Activated CD8-positive, alpha-beta T cell treated with anti-CD3 and anti-CD28 coated beads, Interleukin-2, amount 10 ng/mL, durations not matched to agents 7 days and 5 days (primary cell): ENCODE measurements at regions of chr6 and their contacts with region 1.

Region 1: GRCh38 chr6:42104095-42104806 is 38.2 kb downstream of the C6orf132 start:
- DNase-seq: peak; percentile 82
- ATAC-seq: peak; percentile 94
- H3K4me3 Mint-ChIP-seq: peak overlapping the region; percentile 65
- H3K27ac Mint-ChIP-seq: peak overlapping the region; percentile 74
- H3K4me1 Mint-ChIP-seq: peaks cover 30% of the 10 kb centered on the region
- H3K27me3 Mint-ChIP-seq: peaks cover 2% of the 10 kb centered on the region

Region 2: GRCh38 chr6:41722969-41723529 is 381.2 kb before region 1 on chr6:
- CTCF ChIA-PET with region 1: no interaction called
- POLR2A ChIA-PET with region 1: no interaction called
- DNase-seq: no peak
- ATAC-seq: no peak
- H3K4me3 Mint-ChIP-seq: no peak overlapping the region
- H3K27ac Mint-ChIP-seq: no peak overlapping the region
- H3K4me1 Mint-ChIP-seq: peaks cover 15% of the 10 kb centered on the region
- H3K27me3 Mint-ChIP-seq: no peaks in the 10 kb centered on the region

Region 3: GRCh38 chr6:41735427-41736356 is 368.6 kb before region 1 on chr6 and contains the start of gene TFEB:
- CTCF ChIA-PET with region 1: no interaction called
- POLR2A ChIA-PET with region 1: no interaction called
- DNase-seq: peak; percentile 95
- ATAC-seq: peak; percentile 69
- H3K4me3 Mint-ChIP-seq: peak within 1 kb of the TSS; percentile 77
- H3K27ac Mint-ChIP-seq: peak within 1 kb of the TSS; percentile 74
- H3K4me1 Mint-ChIP-seq: peaks cover 34% of the 10 kb centered on the region
- H3K27me3 Mint-ChIP-seq: no peaks in the 10 kb centered on the region
- total RNA-seq, gene TFEB: 18.5 to 21.2 TPM

Region 4: DNA sequence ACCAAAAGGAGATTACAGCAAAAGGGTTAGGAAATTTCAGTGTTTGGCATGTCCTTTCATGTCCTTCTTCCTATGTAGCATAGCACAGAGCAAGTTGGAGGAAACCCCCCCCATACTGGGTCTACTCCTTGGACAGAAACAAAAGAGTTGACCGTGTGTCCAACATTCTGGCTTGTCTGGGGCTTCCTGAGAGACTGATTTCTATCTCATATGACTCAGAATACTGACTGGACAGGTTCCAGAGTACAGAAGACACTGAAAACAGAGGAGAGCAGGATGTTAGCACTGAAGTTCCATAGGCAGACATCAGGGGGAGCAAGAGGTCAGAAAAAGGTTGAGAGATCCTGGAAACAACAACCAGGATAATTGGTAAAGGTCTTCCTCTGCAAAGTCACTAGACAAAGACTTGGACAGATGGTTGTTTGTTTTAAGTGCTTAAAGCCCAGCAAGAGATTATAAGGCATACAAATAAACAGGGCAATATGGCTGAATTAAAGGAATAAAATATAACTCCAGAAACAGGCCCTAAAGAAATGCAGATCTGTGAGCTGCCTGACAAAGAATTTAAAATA is 257.5 kb before region 1 on chr6:
- CTCF ChIA-PET with region 1: interaction called, 15 read pairs
- POLR2A ChIA-PET with region 1: no interaction called
- DNase-seq: peak; percentile 65
- ATAC-seq: peak; percentile 81
- H3K4me3 Mint-ChIP-seq: no peak overlapping the region
- H3K27ac Mint-ChIP-seq: no peak overlapping the region
- H3K4me1 Mint-ChIP-seq: peaks cover 9% of the 10 kb centered on the region
- H3K27me3 Mint-ChIP-seq: no peaks in the 10 kb centered on the region

Region 5: DNA sequence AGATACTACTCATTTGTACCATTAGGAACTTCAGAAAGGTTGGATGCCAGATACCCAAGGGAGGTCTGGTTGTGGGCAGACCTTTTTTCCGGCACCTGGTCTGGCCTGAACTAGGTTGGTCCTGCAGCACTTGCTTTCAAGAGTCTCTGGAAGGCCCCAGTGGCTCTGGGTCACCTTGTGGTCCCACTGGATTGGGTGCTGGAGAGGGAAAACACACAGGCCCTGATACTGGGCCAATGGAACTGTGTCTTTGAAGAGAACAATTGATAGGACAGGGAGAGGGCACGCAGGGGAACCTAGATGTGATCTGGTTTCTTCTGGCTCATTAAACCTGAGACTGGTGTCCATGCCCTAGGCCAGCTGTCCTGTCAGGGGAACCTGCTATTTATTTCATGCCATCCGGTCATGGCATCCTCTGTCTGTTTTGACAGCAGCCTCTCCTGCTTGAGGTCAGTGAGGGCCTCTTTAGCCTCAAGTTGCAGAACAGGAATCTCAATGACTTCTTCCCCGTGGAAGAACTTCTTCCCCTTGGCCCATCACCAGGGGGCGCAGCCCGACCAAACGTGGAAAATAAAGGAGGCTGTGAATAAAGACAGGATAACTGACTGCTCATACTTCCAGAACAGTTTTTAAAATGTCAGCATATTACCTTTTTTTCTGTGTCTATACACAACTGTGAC is 29.0 kb before region 1 on chr6:
- CTCF ChIA-PET with region 1: interaction called, 26 read pairs
- POLR2A ChIA-PET with region 1: no interaction called
- DNase-seq: peak; percentile 61
- ATAC-seq: no peak
- H3K4me3 Mint-ChIP-seq: no peak overlapping the region
- H3K27ac Mint-ChIP-seq: no peak overlapping the region
- H3K4me1 Mint-ChIP-seq: no peaks in the 10 kb centered on the region
- H3K27me3 Mint-ChIP-seq: no peaks in the 10 kb centered on the region

Region 6: DNA sequence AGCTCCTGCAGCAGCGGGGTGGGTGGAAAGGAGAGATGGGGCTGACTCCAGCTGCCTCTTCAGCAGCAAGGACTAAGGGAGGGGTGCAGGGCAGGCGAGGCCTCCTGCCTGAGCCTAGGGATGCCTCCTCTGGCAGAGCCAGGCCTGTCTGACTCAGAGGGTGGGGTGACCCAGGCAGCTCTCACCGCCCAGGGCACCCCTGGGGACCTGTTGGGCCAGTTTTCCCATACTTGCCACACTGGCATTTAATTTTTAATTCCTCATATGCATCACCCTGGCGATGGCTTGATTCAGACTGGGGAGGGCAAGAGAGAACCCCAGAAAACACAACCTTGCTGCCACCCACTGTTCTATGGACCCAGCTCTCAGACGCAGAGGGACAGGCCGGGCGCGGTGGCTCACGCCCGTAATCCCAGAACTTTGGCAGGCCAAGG is 18.5 kb after region 1 on chr6:
- CTCF ChIA-PET with region 1: interaction called, 13 read pairs
- POLR2A ChIA-PET with region 1: no interaction called
- DNase-seq: no peak
- ATAC-seq: no peak
- H3K4me3 Mint-ChIP-seq: no peak overlapping the region
- H3K27ac Mint-ChIP-seq: no peak overlapping the region
- H3K4me1 Mint-ChIP-seq: no peaks in the 10 kb centered on the region
- H3K27me3 Mint-ChIP-seq: no peaks in the 10 kb centered on the region

Region 7: DNA sequence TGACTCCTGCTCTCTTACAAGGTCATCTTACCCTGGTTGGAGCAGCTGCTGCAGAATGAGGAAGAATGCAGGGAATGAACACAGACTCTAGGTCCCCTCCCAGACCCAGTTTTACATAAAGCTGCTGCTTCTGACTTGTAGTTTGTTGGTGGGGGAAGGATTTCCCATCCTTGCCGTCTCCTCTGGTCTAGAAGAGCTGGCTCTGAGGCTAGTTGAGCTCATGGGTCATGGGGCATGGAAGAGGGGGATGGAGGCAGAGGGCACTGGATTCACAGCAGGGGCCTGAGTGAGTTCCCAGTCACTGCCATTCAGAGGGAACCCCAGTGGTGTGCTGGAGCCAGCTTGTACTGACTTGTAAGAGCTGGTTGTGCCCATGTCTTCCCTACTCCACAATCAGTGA is 59.7 kb after region 1 on chr6:
- CTCF ChIA-PET with region 1: interaction called, 12 read pairs
- POLR2A ChIA-PET with region 1: no interaction called
- DNase-seq: no peak
- ATAC-seq: no peak
- H3K4me3 Mint-ChIP-seq: no peak overlapping the region
- H3K27ac Mint-ChIP-seq: no peak overlapping the region
- H3K4me1 Mint-ChIP-seq: peaks cover 7% of the 10 kb centered on the region
- H3K27me3 Mint-ChIP-seq: peaks cover 10% of the 10 kb centered on the region

Region 8: DNA sequence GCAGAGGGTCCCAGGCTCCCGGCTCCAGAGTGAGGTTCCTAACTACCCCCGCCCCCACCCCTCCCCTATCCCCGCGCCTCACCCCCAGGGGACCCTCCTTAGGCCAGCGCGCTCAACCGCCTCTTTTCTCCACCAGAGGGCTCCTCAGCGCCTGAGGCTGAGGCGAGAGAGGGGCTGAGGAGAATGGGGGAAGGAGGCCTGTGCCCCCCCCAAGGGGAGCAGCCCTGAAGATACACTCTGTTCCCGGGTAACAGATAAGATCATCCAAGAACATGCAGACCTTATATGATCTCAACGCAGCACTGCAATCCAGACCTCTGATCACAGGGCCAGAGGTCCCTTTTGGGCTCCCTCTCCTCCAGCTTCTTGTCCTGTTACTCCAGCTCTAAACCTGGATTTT is 156.7 kb after region 1 on chr6:
- CTCF ChIA-PET with region 1: no interaction called
- POLR2A ChIA-PET with region 1: no interaction called
- DNase-seq: peak; percentile 43
- ATAC-seq: peak; percentile 75
- H3K4me3 Mint-ChIP-seq: no peak overlapping the region
- H3K27ac Mint-ChIP-seq: peak overlapping the region; percentile 55
- H3K4me1 Mint-ChIP-seq: peaks cover 11% of the 10 kb centered on the region
- H3K27me3 Mint-ChIP-seq: no peaks in the 10 kb centered on the region